Cardiac septum (tissue), 1 donor: ENCODE measurements at regions of chr12 and their contacts with region 1.

Region 1: DNA sequence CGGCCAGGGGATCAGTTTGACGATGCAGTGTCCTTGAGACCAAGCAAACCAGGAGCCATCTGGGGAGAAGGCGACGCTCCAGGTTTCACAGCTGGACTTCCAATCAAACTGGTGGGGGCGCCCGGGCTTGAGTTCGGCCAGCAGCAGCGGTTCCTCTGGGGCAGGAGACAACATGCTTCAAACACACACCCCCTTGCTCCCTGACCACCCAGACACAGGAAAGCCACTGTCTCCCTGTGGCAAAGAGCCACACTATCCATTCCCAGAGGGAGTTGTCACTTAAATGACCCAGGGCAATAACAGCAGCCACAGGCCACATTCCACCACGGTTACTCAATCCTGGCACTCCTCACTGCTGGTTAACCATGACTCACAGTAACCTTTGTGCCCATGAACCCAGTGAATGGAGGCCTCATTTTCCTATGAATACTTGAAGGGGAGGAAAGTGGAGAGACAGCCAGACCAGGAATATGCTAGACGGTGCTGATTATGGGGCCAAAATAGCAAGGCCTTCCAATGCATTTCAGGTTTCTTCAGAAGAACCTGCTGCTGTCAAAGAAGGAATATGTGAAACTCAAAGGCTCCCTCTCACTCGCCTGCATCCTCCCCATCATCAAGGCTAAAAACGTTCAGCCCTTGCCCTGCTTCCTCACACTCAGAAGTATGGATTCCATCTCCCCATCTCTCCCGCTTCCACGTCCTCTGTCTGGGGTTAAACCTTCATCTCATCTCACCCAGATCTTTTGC is 8.5 kb downstream of the WSB2 start:
- DNase-seq: peak; percentile 82

Region 2: GRCh38 chr12:118103604-118104382 is 51.3 kb after region 1 on chr12 and contains the start of gene VSIG10:
- intact Hi-C with region 1: loop called (anchors 2 kb)
- DNase-seq: peak; percentile 88
- total RNA-seq, gene VSIG10: 10.0 TPM

Region 3: DNA sequence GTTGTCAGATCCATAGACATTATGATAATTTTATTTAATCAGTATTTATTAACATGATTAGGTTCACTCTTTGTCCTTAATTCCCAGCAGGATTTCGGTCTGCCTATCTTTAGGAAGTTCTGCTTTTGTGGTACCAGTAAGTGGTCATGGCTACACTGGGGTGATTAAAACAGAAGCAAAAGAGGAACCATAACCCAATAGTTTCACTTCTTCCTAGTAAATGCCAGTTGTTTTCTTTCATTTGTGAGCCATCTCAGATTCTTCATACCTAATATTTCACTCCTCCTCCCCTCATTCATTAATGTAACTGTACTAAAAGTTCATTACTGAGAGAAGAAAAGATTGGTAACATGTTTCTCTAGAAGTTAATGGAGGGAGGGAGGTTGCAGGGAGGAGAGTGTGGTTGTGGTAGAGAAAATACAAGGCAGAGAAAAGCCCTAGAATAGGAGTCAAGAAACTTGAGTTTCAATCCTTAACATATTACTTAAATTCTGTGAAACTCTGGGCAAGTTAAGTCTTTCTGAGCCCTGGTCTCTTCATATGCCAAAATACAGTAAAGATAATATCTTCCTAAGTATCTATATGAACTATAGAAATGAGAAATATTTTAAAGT is 184.7 kb after region 1 on chr12:
- intact Hi-C with region 1: no loop called
- DNase-seq: no peak